Activated CD4-positive, alpha-beta memory T cell treated with anti-CD3 and anti-CD28 coated beads, Interleukin-2, amount 10 ng/mL, durations not matched to agents 7 days and 5 days (primary cell): ENCODE measurements at regions of chr12 and their contacts with region 1.

Region 1: GRCh38 chr12:12724661-12725545 is 7.7 kb downstream of the CDKN1B start:
- DNase-seq: peak; percentile 92
- H3K4me3 Mint-ChIP-seq: peak overlapping the region; percentile 94
- H3K27ac Mint-ChIP-seq: peak overlapping the region; percentile 96
- H3K4me1 Mint-ChIP-seq: peaks cover 33% of the 10 kb centered on the region
- H3K27me3 Mint-ChIP-seq: no peaks in the 10 kb centered on the region

Region 2: GRCh38 chr12:12349711-12350665 is 374.9 kb before region 1 on chr12 and contains the start of gene MANSC1:
- CTCF ChIA-PET with region 1: no interaction called
- POLR2A ChIA-PET with region 1: interaction called, 10 read pairs
- DNase-seq: peak; percentile 65
- H3K4me3 Mint-ChIP-seq: peak within 1 kb of the TSS; percentile 63
- H3K27ac Mint-ChIP-seq: no peak within 1 kb of the TSS
- H3K4me1 Mint-ChIP-seq: peaks cover 20% of the 10 kb centered on the region
- H3K27me3 Mint-ChIP-seq: peaks cover 15% of the 10 kb centered on the region
- total RNA-seq, gene MANSC1: 0.10 to 0.15 TPM

Region 3: GRCh38 chr12:12442548-12443071 is 282.3 kb before region 1 on chr12:
- CTCF ChIA-PET with region 1: no interaction called
- POLR2A ChIA-PET with region 1: interaction called, 38 read pairs
- DNase-seq: no peak
- H3K4me3 Mint-ChIP-seq: peak overlapping the region; percentile 39
- H3K27ac Mint-ChIP-seq: peak overlapping the region; percentile 98
- H3K4me1 Mint-ChIP-seq: peaks cover 91% of the 10 kb centered on the region
- H3K27me3 Mint-ChIP-seq: no peaks in the 10 kb centered on the region

Region 4: DNA sequence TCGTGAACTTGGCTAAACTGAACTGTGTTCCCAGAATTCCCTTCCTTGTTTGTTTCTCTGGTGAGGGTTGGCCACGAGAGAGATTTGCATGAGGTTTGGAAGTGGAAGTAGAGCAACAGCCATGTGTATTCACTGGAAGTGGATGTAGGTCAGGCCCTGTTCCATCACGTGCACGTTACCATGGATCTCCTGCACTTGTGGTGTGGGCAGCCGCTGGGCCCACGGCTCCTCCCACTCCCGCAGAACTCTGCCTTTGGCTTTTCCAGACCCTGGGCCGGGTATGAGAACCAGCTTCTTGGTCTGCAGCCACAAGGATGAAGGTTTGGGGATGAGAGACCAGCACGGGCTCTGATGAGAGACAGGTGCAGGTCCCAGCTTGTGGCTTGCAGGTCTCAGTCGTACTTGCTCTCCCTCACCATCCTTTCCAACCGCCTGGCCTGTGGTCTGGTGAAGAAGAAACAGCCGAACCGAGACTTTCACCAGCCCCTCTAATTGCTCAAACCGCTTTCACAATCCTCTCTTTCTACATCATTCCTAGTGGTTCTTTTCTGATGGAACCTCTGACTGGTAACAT is 257.1 kb before region 1 on chr12:
- CTCF ChIA-PET with region 1: no interaction called
- POLR2A ChIA-PET with region 1: interaction called, 580 read pairs
- DNase-seq: peak; percentile 77
- H3K4me3 Mint-ChIP-seq: peak overlapping the region; percentile 40
- H3K27ac Mint-ChIP-seq: peak overlapping the region; percentile 97
- H3K4me1 Mint-ChIP-seq: peaks cover 87% of the 10 kb centered on the region
- H3K27me3 Mint-ChIP-seq: no peaks in the 10 kb centered on the region

Region 5: DNA sequence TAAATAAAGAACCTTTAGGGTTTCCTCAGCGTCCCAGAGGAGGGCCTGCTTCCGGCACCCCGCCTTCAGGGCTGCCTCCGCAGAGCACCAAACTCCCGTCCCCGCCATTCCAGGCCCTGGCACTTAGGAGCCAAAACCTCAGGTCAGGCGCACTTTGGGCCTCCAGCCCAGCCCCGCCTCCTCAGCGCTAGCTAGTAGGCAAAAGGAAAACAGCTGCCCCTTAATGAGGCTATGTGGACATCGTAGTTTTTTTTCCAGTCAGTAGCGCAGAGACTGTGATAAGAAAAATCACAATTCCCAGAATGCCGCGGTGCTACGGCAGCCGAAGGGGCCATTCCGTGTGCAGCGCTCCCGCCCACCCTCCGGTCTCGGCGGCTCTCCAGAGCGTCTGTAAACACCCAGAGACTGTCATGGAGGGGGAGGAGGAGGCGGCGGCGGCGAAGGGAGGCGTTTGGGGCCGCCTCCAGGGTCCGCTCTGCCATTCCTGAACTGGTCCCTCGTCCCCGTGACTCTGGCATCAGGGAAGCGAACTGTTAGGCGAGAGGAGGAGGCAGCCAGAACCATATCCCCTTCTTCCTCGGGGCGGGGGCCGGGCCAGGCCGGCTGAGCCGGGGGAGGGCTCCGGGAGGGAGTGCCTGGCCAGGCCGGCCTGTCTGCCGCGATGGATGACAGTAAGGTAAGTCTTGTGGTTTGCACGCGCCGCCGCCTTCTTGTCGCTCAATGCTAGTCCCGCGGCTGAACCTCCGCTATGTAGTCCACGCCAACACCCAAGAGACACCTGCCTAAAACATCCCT is 113.2 kb before region 1 on chr12 and contains the start of gene CREBL2:
- CTCF ChIA-PET with region 1: no interaction called
- POLR2A ChIA-PET with region 1: interaction called, 13 read pairs
- DNase-seq: peak; percentile 86
- H3K4me3 Mint-ChIP-seq: peak within 1 kb of the TSS; percentile 89
- H3K27ac Mint-ChIP-seq: peak within 1 kb of the TSS; percentile 95
- H3K4me1 Mint-ChIP-seq: peaks cover 64% of the 10 kb centered on the region
- H3K27me3 Mint-ChIP-seq: no peaks in the 10 kb centered on the region
- total RNA-seq, gene CREBL2: 24.2 to 26.1 TPM